Right ventricle myocardium inferior (tissue), 1 donor: ENCODE measurements at regions of chr20 and their contacts with region 1.

Region 1: DNA sequence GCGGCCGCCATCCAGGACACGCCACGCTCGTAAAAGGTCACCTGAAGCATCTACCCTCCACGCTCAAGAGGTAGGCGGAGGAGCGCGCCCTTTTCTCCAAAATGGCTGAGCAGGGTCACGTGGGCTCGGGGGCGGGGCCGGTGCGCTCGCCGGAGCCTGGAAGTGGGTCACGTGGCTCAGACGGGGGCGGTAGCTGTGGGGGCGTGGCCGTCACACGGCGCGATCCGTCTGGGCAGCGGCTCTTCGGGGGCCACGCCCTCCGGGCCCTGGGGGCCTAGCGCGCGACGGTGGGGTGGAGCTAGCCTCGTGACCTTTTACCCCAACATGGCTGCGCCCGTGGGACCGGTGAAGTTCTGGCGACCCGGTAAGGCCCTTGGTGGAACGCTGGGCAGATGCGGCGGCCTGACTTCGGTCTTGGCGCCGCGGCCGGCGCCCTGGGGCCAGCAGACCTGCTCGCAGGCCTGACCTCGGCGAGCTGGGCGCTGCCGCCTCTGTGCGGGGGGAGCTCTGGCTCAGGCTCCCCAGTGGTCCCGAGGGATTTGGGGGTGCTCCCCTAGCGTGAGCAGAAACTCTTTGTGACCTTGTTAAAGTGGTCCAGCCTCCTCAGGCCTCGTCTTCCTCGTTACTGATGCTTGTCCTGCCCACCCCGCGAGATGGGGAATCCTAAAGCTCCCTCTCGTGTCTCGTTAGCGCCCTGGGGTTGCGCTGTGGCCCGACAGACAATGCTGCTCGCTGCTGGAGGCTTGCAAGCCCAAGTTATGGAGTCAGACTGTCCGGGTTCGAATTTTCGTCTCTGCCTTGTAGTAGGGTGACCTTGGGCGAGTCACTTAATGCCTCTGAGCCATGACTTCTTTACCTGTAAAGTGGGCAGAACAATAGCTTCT is at the start of gene DHX35:
- DNase-seq: peak; percentile 99
- ATAC-seq: peak; percentile 100
- total RNA-seq, gene DHX35: 11.0 TPM

Region 2: GRCh38 chr20:38985603-38986170 is 23.4 kb after region 1 on chr20:
- intact Hi-C with region 1: loop called (anchors 1 kb)
- DNase-seq: no peak
- ATAC-seq: peak; percentile 82